Lower leg skin (tissue), 4 donors: ENCODE measurements at regions of chr6 and their contacts with region 1.

Region 1: GRCh38 chr6:96897383-96898240 is at the start of gene NDUFAF4:
- DNase-seq: peak; percentile 93 to 99
- H3K4me3 ChIP-seq: peak within 1 kb of the TSS; percentile 82
- CTCF ChIP-seq: no peak
- POLR2A ChIP-seq: no peak
- total RNA-seq, gene NDUFAF4: 6.7 to 19.6 (median 16.4) TPM

Region 2: DNA sequence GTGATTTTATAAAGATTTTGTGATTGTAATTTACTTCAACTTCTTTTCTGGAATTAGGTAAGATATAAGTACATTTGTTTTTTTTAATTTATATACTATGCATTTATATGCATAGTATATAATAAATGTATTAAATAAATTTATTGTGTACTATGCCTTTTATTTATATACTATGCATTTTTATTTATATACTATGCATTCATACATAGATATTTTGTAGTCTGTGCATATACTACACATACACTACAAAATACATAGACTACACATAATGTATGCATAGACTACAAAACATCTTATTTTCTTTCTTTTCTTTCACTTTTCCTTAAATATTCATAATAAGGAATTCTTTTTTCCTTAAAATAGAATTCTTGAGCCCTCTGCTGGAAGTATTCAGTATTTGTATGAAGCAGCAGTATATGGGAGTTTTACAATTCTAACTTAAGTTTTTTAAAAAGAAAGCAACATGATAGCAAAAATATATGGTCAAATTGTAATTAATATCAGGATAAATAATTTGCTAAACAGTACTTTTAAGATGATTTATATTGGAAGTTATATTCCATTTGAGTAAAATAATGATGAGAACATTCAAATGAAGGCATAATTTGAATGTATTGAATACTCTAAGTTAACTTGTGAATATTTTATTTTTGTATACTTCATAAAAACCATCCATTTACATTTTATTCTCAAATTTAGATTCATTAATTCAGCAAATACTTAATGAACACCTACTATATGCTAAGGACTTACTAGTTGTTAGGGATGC is 156.2 kb after region 1 on chr6:
- intact Hi-C with region 1: loop called (anchors 5 kb)
- DNase-seq: no peak
- H3K4me3 ChIP-seq: no peak overlapping the region
- CTCF ChIP-seq: no peak
- POLR2A ChIP-seq: no peak

Region 3: DNA sequence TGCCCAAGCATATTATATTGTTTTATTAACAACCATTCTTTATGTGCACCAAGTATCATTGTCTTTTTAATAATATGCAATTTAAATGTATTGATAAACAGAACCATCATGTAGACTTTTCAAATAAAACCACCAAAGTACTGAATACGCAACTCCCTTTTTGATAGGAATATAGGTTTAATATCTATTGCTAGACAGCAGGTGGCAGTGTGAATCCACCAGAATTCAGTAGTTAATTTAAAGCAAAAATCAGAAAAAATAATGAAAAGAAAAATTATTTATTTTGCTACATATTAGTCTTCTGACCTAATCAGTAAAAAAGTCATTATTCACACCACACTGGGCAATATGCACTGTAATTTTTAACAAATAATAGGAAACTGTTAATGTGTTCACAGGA is 170.6 kb after region 1 on chr6:
- intact Hi-C with region 1: loop called (anchors 5 kb)
- DNase-seq: no peak
- H3K4me3 ChIP-seq: no peak overlapping the region
- CTCF ChIP-seq: no peak
- POLR2A ChIP-seq: no peak

Region 4: DNA sequence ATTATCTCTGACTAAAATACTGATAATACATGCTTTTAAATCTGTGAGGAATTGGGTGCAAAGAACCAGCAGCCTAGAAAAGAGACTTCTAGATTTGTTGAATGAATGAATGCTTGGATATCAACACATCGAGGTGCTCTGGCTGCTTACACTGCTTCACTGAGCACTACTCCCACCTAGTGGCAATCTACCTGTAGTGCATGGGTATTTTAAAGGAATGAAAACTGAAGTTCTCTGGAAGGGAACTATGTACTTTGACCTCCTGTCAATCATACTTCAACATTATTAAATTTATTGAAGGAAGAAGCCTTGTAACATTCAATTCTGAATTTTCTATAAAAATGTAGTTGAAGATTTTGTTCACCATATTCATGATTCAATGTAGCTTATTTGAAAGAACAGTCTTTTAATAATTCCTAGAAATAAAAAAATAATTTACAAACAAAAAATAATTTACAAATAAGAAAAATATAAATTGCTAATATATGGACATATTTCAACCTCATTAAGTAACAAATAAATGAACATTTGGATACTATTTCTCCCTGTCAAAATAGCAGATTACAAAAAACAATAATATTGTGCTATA is 496.6 kb after region 1 on chr6:
- intact Hi-C with region 1: loop called (anchors 5 kb)
- DNase-seq: peak in 1 of 2 donors; percentile 37
- H3K4me3 ChIP-seq: no peak overlapping the region
- CTCF ChIP-seq: peak in 1 of 3 donors; percentile 45
- POLR2A ChIP-seq: no peak